ENCODE measurements at regions of chr3 and their contacts with region 1.

Region 1: GRCh38 chr3:46923559-46924350 is 46.2 kb downstream of the PTH1R start:
- DNase-seq: peak; percentile 85
- H3K4me3 ChIP-seq: no peak overlapping the region
- H3K27ac ChIP-seq: peak overlapping the region in 4 of 8 donors; percentile 29 to 89 (median 88)
- H3K4me1 ChIP-seq: peaks cover 35 to 60% (median 55%) of the 10 kb centered on the region in 6 donors
- H3K27me3 ChIP-seq: no peaks in the 10 kb centered on the region
- CTCF ChIP-seq: peak; percentile 39 to 85 (median 71)
- POLR2A ChIP-seq: no peak

Region 2: DNA sequence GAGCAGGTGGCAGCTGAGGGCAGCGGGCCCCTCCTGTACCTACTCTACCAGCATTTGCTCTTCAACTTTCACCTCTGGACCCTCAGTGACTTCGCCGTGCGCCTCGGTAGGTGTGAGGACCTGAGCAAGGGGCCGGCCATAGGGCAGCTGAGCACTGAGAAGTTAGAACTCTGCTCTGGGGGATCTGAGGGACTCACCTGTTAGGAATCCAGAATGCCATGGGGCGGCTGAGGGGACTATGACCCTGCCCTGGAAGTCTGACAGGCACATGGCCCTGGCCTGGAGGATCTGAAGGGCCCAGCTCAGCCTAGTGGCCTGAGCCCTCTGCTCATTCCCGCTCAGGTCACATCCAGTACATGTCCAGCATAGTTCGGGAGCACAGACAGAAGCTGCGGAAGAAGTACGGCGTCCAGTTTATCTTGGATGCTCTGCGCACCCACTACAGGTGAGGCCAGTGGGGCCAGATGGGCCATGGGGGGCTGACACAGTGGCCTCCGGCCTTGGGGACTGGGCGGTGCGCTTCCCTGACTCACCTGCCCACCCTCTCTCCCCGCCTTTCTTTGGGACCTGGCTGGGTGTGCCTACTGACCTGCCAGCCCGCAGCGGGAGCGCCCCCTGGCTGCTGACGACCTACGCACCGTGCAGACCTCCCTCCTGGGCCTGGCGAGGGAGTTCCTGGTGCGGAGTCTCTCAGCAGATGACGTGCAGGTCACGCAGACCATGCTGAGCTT is 74.5 kb after region 1 on chr3:
- intact Hi-C with region 1: loop called (anchors 2 kb)
- DNase-seq: peak; percentile 94
- H3K4me3 ChIP-seq: no peak overlapping the region
- H3K27ac ChIP-seq: peak overlapping the region in 3 of 8 donors; percentile 23 to 55 (median 40)
- H3K4me1 ChIP-seq: peaks cover 9 to 65% (median 29%) of the 10 kb centered on the region in 6 donors
- H3K27me3 ChIP-seq: no peaks in the 10 kb centered on the region
- CTCF ChIP-seq: peak; percentile 79 to 94 (median 90)
- POLR2A ChIP-seq: no peak

Region 3: DNA sequence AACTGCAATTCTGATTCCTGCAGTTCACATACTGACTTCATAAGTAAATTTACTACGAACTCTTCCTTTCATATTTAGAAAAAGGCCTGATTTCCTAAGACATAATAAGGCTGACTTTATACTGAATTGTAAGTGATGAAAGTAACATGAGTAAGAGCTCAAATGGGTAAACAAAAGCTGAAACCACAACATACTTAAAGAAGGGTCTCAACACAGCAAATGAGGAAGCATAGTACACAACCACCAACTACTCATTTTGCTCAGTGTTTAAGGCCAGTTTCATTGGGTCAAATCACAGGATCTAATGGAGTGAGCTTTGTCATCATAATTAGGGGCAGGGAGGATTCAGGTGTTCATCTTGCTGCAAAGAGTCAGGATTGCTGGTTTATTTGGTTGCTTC is 158.8 kb after region 1 on chr3:
- intact Hi-C with region 1: no loop called
- DNase-seq: no peak
- H3K4me3 ChIP-seq: peak overlapping the region in 1 of 8 donors; percentile 10
- H3K27ac ChIP-seq: peak overlapping the region in 6 of 8 donors; percentile 1 to 77 (median 57)
- H3K4me1 ChIP-seq: peaks cover 0 to 44% (median 10%) of the 10 kb centered on the region in 6 donors
- H3K27me3 ChIP-seq: no peaks in the 10 kb centered on the region
- CTCF ChIP-seq: no peak
- POLR2A ChIP-seq: no peak

Region 4: DNA sequence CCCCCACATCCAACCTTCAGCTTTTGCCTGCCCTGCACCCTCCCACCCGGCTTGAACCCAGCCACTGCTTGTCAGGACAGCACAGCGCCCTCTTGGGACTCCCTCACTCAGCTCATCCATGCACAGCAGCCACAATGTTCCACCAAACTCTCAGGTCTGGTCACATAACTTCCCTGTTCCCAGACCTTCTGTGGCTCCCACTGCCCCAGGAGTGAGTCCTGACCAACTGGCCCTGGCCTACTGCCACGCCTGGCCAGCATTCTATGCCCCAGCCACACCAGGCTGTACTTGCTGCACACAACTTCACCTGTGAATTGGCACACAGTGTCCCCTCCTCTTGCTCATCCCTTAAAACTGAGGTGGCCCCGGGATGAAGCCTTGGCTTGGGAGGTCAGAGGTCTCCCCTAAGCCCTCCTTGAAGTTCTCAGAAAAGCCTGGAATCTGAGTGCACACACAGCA is 1485.1 kb after region 1 on chr3:
- intact Hi-C with region 1: no loop called
- DNase-seq: peak; percentile 55
- H3K4me3 ChIP-seq: no peak overlapping the region
- H3K27ac ChIP-seq: peak overlapping the region in 2 of 8 donors; percentile 71 to 72
- H3K4me1 ChIP-seq: peaks cover 0 to 25% (median 10%) of the 10 kb centered on the region in 6 donors
- H3K27me3 ChIP-seq: no peaks in the 10 kb centered on the region
- CTCF ChIP-seq: no peak
- POLR2A ChIP-seq: no peak